ENCODE measurements at regions of chr16 and their contacts with region 1.

Region 1: DNA sequence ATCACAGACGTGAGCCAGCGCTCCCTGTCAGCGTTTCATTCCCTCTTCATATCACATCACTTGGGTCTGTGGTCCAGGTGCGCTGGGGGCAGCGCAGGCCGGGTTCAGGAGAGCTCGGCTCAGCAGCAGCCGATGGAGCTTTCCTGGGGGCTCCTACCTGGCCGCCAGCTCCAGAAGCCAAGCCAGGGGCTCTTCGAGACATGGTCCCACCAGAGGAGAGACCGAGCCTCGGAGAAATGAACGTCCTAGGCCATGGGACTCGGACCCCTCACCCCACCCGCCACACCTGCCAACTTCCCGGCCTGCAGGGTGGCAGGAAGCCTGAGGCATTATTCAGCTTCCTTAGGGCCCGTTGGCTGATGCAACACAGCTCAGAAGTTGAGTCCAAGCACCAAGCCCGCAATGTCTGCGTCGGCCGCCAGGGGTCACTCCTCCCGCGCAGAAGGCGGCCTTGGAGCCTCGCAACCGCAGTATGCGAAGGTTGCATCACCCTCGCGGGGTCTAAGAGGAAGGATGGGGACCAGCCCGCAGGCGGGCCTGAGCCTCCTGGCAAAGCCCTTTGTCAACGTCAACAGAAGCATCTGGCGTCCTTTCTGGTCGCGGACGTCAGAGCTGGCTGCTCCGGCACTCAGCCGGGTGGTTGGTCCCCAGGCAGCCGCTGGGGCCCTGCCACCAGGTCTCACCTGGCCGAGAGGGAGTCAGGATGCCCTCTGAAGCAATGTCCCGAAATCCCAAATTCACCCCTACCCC is 13.2 kb upstream of the KLHDC4 start:
- DNase-seq: peak; percentile 82
- H3K4me3 ChIP-seq: no peak overlapping the region
- CTCF ChIP-seq: peak; percentile 98

Region 2: GRCh38 chr16:87550496-87550961 is 228.5 kb before region 1 on chr16:
- CTCF ChIA-PET with region 1: no interaction called
- POLR2A ChIA-PET with region 1: no interaction called
- DNase-seq: no peak
- H3K4me3 ChIP-seq: no peak overlapping the region
- CTCF ChIP-seq: peak; percentile 92

Region 3: GRCh38 chr16:87765776-87766484 is 13.1 kb before region 1 on chr16 and contains the start of gene KLHDC4:
- CTCF ChIA-PET with region 1: interaction called, 21 read pairs
- POLR2A ChIA-PET with region 1: no interaction called
- DNase-seq: no peak
- H3K4me3 ChIP-seq: peak within 1 kb of the TSS; percentile 82
- CTCF ChIP-seq: no peak

Region 4: DNA sequence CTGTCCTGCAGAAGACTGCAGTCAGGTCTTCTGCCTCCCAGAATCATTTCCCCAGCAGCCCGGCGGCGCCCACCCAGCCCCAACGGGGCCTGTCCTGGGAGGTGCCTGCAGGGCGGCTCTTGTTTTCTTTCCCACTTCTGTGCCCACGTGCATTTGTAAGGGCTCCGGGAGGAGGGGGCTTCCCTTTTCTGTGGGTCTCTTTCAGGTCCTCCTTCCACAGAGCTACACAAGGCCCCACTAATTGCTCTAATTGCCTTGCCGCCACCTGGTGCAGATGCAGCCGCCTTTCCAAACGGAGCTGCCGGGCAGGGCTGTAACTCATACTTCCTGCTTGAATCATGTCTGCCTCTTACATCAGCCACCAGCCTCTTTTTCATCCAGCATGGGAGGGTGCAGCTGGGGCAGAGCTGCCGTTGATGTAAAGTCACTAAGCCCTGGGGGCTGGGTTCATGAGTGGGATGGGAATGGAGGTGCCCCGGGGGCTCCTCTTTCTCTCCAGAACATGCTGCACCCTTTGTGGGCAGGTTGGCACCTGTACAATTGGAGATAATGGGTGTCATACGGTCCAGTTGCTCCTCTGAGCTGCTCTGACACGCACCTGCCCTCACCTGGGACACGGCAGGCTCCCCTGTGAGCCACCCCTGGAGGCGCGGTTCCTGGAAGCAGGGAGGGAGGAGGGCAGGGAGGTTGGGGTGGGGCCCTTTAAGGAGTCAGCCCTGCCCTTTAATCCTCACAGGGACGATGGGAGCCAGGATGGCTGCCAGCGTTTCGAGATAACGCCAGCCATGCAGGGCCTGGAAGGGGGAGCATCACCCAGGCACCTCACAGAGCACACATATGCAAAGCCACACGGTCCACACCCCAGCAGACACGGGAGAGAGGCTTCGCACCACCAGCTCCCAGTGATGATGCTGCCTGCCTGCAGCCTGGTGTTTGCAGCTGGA is 27.9 kb after region 1 on chr16:
- CTCF ChIA-PET with region 1: interaction called, 28 read pairs
- POLR2A ChIA-PET with region 1: interaction called, 9 read pairs
- DNase-seq: peak; percentile 63
- H3K4me3 ChIP-seq: peak overlapping the region; percentile 52
- CTCF ChIP-seq: no peak

Region 5: DNA sequence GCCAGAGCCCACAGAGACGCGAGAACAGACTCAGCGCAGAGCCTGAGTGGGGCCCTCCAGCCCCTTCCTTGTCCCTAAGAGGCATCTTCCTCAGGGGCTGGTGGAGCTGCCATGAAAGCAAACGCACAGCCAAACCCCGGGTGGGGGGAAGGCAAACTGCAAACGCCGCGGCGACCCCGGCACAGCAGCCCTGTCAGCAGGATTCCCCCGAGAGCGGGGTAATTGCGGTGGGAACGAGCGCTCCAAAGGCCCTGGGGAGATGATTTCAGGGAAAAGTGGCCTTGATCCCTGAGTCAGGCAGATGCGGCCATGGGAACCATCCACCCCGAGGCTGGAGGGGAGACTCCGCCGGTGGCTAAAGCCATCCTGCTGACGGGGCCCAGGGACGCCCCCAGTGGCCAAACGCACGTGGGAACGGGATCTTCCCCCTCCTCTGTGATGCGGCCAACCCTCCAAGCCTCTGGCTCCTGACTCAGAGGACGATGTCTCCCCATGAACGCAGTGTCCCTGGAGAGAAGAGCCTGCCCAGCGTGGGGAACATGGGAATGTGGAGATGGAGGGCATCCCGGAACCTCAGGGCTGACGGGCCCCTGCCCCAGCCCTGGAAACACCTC is 65.2 kb after region 1 on chr16:
- CTCF ChIA-PET with region 1: interaction called, 59 read pairs
- POLR2A ChIA-PET with region 1: interaction called, 3 read pairs
- DNase-seq: no peak
- H3K4me3 ChIP-seq: no peak overlapping the region
- CTCF ChIP-seq: no peak

Region 6: DNA sequence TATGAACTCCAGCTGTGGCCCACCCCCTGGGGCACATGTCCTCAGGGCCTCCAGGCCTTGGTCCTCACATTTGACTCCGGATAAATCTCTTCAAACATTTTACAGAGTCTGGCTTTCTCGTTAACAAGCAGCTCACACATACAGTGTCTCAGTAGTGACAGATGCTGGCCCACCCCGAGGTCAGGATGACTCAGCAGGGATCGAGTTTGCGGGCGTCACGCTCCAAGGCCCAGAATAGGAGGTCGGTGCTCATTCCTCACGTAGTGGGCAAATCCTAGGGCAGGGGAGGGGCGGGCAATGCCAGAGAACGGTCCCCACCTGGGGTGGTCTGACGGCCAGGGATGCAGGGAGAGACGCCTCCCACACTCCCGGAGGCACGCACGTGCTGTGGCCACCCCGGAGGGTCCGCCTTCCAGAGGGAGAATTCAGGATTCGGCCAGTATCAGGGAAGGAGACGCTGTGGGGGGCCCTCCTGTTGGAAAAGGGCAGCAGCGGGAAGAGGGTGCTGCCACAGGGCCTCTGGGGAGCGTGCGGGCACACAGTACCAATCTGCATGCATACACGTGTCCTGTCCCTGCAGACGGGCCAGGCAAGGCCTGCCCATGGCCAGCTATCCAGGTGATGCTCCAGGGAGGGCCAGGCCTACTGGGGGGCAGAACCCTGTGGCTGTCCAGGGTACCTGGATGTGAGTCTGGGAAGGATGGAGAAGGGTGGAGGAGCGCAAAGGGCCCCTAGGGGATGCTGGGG is 81.7 kb after region 1 on chr16:
- CTCF ChIA-PET with region 1: interaction called, 37 read pairs
- POLR2A ChIA-PET with region 1: interaction called, 4 read pairs
- DNase-seq: no peak
- H3K4me3 ChIP-seq: peak overlapping the region; percentile 18
- CTCF ChIP-seq: no peak

Region 7: DNA sequence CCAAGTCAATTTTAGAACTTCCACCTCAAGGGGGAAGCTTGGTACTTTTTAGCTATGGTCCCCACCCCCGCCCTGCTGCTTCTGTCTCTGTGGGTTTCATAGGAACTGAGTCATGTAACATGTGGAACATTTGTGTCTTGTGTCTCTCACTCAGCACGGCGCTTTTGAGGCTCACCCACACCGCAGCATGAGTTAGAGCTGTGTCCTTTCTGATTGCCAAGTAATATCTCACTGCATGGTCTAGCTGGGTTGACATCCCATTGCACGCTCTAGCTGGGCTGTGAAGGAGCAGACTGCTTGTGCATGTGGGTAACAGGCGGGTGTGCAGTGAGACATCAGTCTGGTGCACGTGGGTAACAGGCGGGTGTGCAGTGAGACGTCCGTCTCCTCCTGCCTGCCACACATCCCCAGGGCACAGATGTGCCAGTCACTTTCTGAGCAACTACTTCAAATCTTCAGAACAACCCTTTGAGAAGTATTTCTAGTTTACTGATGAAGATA is 116.7 kb after region 1 on chr16:
- CTCF ChIA-PET with region 1: interaction called, 23 read pairs
- POLR2A ChIA-PET with region 1: interaction called, 4 read pairs
- DNase-seq: no peak
- H3K4me3 ChIP-seq: no peak overlapping the region
- CTCF ChIP-seq: no peak

Measured in AG04449 (cell line).